ENCODE measurements at regions of chr9 and their contacts with region 1.

Region 1: DNA sequence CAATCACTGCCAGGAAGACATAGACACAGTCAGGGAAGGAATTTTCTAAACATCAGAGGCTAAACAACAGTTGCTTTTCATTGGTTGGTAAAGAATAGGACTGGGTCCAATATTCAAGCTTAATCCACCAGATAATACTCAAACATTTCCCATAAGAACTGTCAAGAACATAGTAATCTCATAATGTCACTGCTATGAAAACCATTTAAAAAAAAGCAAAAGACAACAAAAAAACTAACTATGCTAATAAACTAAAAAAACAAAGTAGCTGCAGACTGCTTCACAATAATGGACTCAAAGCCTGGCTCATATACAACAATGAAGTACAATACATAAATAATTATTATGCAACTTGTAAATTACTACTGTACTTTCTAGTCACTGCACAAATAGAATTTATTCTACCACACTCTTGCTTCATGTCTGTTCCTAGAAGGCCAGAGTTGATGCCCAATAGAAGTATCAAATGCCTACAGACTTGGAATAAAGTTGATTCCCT is 148.7 kb downstream of the MLLT3 start:
- DNase-seq: no peak
- CTCF ChIP-seq: no peak

Region 2: DNA sequence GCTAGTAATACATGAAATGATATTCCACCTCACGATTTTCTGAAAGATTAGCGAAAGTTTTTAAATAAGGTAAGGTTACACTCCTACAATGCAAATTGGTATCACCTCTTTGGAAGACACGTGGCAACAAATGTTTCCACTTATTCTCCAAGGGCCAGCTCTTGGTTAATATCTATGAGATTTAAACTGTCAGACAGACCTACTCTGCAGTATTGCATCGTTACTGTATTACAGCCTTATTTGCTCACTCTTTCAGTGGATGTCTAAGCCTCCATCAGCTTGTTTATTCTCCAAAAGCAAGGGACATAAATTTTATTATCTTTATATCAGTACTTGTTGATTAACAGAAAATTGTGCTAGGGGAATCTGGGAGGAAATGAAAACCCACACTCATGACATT is 13.0 kb after region 1 on chr9:
- CTCF ChIA-PET with region 1: interaction called, 16 read pairs
- POLR2A ChIA-PET with region 1: no interaction called
- DNase-seq: no peak
- CTCF ChIP-seq: no peak

Measured in GM10248 (cell line).